Right ventricle myocardium superior (tissue), 1 donor: ENCODE measurements at regions of chr2 and their contacts with region 1.

Region 1: DNA sequence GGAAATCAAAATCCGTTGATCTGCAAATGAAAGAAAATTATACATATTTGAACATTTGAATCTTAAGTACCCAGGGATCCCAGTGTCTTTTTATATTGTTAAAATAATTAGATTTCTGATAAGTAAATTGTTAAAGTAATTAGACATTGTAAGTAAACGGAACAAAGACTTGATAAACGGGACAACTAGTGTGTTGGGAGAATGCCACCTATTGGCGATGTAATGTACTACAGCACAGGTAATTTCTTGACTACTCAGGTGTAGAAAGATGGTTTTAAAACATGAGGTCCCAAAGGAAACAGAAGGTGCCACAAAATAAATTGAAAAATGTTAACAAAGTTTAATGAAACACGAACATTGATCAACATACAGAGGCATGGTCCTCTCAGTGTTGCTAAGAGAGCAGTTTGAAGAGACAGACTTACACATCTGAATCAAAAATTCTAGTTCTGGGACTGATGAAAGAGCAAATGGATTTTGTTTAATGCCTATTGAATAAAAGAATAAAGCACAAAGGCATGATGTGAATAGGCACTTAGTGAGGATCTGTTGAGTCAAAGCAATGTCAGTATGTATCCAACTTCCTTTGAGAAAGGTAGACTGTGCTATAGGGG is 103.4 kb upstream of the RASGRP3 start:
- DNase-seq: no peak
- ATAC-seq: no peak

Region 2: DNA sequence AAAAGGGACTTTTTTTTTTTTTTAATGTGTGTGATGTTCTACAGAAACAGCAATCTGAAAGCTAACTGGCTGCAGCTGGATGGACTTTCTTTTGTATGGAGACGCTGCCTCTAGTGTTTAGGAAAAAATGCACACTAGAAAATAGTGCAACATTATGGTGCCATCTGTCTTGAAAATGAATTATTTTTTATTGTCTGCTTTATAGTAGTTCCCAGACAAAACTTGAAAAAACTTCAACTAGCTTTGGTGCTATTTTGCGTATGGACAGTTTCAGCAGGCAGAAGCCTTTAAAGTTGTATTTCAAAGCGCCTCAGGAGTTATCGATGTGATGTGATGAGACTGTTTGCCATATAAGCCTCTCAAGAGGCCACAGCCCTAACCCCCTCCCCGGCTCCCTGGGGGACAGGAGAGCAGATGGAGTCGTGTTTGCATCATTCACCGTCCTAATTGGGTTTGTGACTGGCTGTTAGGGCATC is 339.4 kb before region 1 on chr2:
- intact Hi-C with region 1: loop called (anchors 10 kb)
- DNase-seq: no peak
- ATAC-seq: peak; percentile 81

Region 3: DNA sequence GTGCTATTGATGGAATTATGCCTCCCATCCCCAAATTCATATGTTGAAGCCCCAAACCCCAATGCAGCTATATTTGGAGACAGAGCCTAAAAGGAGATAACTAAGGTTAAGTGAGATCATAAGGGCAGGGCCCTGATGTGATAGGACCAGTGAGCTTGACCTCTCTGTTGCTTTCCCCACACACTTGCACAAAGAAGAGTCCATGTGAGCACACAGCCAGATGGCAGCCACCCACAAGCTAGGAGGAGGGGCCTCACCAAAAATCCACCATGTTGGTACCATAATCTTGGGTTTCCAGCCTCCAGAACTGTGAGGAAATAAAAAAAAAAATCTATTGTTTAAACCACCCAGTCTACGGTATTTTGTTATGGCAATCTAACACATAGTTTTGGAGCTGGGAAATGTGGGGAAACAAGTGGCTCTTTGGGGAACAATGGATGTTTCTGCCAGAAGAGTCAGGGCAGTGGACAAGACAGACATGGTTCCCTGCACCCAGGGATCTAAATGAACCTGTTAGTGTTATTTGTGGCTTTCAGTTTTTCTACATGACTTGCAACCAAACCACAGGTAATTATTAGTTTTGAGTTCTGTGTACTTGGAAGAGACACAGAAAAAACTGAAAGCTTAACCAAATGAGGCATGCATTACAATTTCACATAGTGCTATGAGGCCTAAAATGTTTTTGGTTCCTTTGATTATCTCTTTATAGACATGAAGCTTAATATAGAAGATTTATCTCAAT is 167.2 kb before region 1 on chr2:
- intact Hi-C with region 1: no loop called
- DNase-seq: no peak
- ATAC-seq: no peak

Region 4: GRCh38 chr2:33426666-33427231 is 53.7 kb after region 1 on chr2:
- intact Hi-C with region 1: no loop called
- DNase-seq: peak; percentile 45
- ATAC-seq: peak; percentile 86